H1 (cell line): ENCODE measurements at regions of chr4 and their contacts with region 1.

Region 1: DNA sequence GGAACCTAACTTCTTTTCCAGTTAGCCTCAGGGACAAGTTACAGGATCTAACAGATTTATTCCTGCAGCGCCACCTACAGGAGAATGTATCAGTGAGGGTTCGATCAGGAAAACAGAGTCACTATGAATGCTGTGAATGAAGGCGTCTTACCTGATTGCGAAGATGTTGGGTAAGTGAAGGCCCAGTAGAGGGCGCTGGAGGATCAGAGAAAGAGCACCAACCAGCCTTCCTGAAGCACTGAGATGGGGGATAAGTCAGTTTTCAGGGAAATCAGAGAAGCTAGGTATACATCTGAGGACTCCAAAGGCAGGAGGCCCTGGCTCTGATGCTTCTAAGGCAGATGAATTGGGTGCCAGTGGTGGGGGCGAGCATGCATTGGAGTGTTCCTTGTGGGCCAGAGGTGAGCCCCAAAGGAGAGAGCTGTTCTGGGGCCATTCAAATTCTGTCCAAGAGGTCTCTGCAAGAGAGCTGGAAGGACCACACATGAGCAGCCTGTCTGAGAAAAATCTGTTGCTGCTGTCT is 169.9 kb upstream of the AADAT start:
- DNase-seq: peak; percentile 84 to 89
- H3K4me3 ChIP-seq: no peak overlapping the region
- H3K27ac ChIP-seq: no peak overlapping the region
- H3K4me1 ChIP-seq: no peaks in the 10 kb centered on the region
- H3K27me3 ChIP-seq: no peaks in the 10 kb centered on the region
- CTCF ChIP-seq: peak; percentile 56 to 99 (median 97)
- EP300 ChIP-seq: no peak
- POLR2A ChIP-seq: no peak
- RAD21 ChIP-seq: peak; percentile 99

Region 2: DNA sequence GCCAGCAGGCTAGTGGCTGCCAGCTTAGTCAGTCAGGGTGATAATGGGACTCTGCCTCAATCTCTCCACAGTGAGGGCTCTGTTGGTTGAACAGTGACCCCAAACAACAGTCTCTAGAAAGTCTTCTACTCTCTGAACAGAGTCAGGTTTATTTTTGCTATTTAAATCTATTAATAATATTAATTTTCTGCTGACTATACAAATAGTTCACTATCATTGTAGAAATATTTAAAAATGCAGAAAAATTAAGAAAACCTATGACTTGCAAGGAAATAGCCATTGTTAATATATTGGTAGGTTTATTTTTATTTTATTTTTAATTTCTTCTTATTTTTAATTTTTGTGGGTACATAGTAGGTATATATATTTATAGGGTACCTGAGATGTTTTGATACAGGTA is 102.0 kb before region 1 on chr4:
- CTCF ChIA-PET with region 1: interaction called, 14 read pairs
- POLR2A ChIA-PET with region 1: no interaction called
- DNase-seq: no peak
- H3K4me3 ChIP-seq: no peak overlapping the region
- H3K27ac ChIP-seq: no peak overlapping the region
- H3K4me1 ChIP-seq: no peaks in the 10 kb centered on the region
- H3K27me3 ChIP-seq: no peaks in the 10 kb centered on the region
- CTCF ChIP-seq: no peak
- EP300 ChIP-seq: no peak
- POLR2A ChIP-seq: no peak
- RAD21 ChIP-seq: no peak

Region 3: DNA sequence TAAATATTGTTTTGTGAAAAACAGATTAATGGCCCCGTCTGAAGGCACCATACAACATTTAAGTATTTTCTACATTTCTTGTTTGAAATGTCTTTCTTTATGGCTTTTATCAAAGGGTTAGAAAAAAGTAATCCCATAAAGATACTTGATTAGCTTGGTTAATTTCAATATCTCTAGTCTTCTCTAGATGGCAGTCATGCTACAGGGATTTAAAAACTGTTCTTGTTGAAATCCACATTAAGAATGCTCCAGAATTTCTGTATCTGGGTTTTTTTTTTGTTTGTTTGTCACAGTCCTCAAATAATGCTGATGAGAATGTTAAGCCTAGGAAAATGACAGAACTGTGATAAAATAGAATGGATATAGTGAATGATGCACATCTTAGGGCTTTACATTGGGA is 60.9 kb before region 1 on chr4:
- CTCF ChIA-PET with region 1: interaction called, 28 read pairs
- POLR2A ChIA-PET with region 1: no interaction called
- DNase-seq: no peak
- H3K4me3 ChIP-seq: no peak overlapping the region
- H3K27ac ChIP-seq: no peak overlapping the region
- H3K4me1 ChIP-seq: no peaks in the 10 kb centered on the region
- H3K27me3 ChIP-seq: no peaks in the 10 kb centered on the region
- CTCF ChIP-seq: no peak; a peak in 1 of 4 replicates
- EP300 ChIP-seq: no peak
- POLR2A ChIP-seq: no peak
- RAD21 ChIP-seq: peak in 1 of 2 experiments; percentile 49

Region 4: DNA sequence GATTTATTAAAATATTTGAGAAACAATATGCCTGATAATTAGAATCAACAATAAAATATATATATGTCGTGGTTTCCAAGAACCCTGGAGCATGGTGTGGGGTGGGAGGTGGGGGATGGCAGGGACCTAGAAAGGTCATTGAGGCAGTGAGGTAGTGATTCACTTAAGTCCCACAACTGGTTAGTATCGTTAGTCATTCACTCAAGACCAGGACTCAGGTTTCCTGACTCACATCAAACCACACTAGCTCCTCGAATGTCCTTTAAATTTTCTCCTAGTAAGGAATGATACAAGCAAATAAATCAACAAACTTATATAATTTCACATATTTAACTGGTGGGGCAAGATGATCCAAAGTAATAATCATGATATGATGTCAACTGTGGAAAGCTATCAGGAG is 11.1 kb before region 1 on chr4:
- CTCF ChIA-PET with region 1: interaction called, 53 read pairs
- POLR2A ChIA-PET with region 1: no interaction called
- DNase-seq: no peak
- H3K4me3 ChIP-seq: no peak overlapping the region
- H3K27ac ChIP-seq: no peak overlapping the region
- H3K4me1 ChIP-seq: peaks cover 0 to 3% (median 0%) of the 10 kb centered on the region in 4 experiments; a peak in 2 of 7 replicates
- H3K27me3 ChIP-seq: peaks cover 0 to 1% (median 0%) of the 10 kb centered on the region in 4 experiments; a peak in 1 of 7 replicates
- CTCF ChIP-seq: no peak
- EP300 ChIP-seq: no peak
- POLR2A ChIP-seq: no peak
- RAD21 ChIP-seq: no peak

Region 5: GRCh38 chr4:170352231-170352630 is 92.5 kb after region 1 on chr4:
- CTCF ChIA-PET with region 1: interaction called, 10 read pairs
- POLR2A ChIA-PET with region 1: no interaction called
- DNase-seq: no peak
- H3K4me3 ChIP-seq: no peak overlapping the region
- H3K27ac ChIP-seq: no peak overlapping the region
- H3K4me1 ChIP-seq: no peaks in the 10 kb centered on the region
- H3K27me3 ChIP-seq: no peaks in the 10 kb centered on the region
- CTCF ChIP-seq: no peak
- EP300 ChIP-seq: no peak
- POLR2A ChIP-seq: no peak
- RAD21 ChIP-seq: no peak

Region 6: GRCh38 chr4:170853422-170854021 is 593.8 kb after region 1 on chr4:
- CTCF ChIA-PET with region 1: interaction called, 33 read pairs
- POLR2A ChIA-PET with region 1: no interaction called
- DNase-seq: peak; percentile 27 to 69
- H3K4me3 ChIP-seq: no peak overlapping the region
- H3K27ac ChIP-seq: no peak overlapping the region
- H3K4me1 ChIP-seq: no peaks in the 10 kb centered on the region
- H3K27me3 ChIP-seq: no peaks in the 10 kb centered on the region
- CTCF ChIP-seq: peak; percentile 73 to 85 (median 83)
- EP300 ChIP-seq: no peak
- POLR2A ChIP-seq: no peak
- RAD21 ChIP-seq: peak; percentile 80 to 81